ENCODE measurements at regions of chr19 and their contacts with region 1.

Region 1: GRCh38 chr19:1774999-1775772 is 21.9 kb downstream of the ONECUT3 start:
- DNase-seq: no peak
- ATAC-seq: peak; percentile 88
- H3K4me3 ChIP-seq: peak overlapping the region in 1 of 3 experiments; percentile 46; a peak in 1 of 6 replicates
- H3K27ac ChIP-seq: no peak overlapping the region
- H3K4me1 ChIP-seq: no peaks in the 10 kb centered on the region
- H3K27me3 ChIP-seq: peaks cover 8 to 66% of the 10 kb centered on the region in 2 experiments
- CTCF ChIP-seq: peak; percentile 90
- EP300 ChIP-seq: no peak
- POLR2A ChIP-seq: no peak
- RAD21 ChIP-seq: peak; percentile 87

Region 2: DNA sequence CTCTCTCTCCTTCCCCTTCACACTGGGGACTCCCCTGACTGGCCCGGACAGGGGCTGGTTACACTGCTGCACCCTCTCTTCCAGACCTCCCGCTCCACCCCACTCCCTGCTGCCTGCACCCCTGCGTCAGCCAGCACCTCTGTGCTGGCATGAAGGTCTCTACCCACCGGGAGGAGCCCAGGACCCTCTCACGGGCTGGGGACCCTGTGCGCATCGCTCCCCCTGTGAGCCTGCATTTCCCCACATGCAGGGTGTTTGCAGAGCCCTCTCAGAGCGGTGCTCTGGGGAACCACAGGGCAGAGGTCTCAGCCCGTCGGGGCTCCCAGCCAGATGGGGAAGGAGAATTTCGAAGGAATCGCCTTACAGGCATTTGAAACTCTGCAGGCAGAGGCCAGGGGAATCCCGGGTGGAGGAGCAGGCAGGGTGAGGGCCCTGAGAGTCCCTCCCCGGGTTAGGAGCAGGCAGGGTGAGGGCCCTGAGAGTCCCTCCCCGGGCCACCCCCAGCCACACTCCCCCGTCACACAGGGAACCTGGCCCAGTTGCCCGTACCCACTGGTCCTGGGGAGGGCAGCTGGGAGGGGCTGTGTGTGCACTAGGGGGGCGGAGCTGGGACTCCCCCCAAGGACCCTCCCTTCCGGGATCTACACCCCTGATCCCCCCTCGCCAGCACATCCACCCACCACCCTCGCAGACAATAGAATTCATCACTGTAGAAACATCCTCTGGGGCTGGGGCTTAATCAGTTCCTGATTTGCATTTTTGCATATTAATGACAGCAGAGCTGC is 106.5 kb before region 1 on chr19:
- CTCF ChIA-PET with region 1: no interaction called
- POLR2A ChIA-PET with region 1: no interaction called
- in situ Hi-C with region 1: no loop called
- intact Hi-C with region 1: no loop called
- DNase-seq: no peak
- ATAC-seq: peak; percentile 33
- H3K4me3 ChIP-seq: no peak overlapping the region
- H3K27ac ChIP-seq: no peak overlapping the region
- H3K4me1 ChIP-seq: no peaks in the 10 kb centered on the region; the same call in 1 of the 2 replicates
- H3K27me3 ChIP-seq: peaks cover 8 to 39% of the 10 kb centered on the region in 2 experiments; a peak in 4 of 5 replicates
- CTCF ChIP-seq: no peak
- EP300 ChIP-seq: no peak
- POLR2A ChIP-seq: no peak
- RAD21 ChIP-seq: no peak

Region 3: DNA sequence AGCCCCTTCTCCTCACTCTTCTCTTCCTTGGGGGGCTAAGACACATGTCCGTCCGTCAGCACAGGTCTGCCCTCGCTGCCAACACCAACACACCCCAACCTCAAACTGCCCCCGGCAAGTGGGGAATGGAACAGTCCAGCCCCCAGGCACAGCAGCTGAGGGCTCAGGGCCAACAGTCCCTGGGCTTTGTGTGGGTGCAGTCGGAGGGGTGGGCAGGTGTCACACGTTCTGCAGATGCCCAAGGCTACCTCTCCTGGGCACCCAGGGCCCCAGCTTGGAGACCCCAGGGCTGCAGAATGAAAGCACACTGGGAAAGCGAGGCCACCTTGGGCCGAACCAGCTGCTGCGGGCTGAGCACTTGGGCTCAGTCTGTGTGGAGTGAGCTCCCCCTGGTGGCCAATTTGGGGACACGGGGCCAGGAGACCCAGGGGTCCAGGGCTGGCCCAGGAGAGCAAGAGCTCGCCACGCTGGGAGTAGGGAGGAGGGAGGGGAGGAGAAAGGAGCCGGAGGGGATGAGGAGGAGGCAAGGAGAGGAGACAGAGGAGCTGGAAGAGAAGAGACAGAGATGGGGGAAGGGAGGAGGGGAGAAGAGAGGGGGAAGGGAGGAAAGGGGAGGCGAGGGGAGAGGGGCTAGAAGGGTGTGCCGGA is 50.8 kb after region 1 on chr19:
- CTCF ChIA-PET with region 1: interaction called, 15 read pairs
- POLR2A ChIA-PET with region 1: no interaction called
- in situ Hi-C with region 1: loop called (anchors 5 kb)
- intact Hi-C with region 1: no loop called
- DNase-seq: peak; percentile 48
- ATAC-seq: peak; percentile 80
- H3K4me3 ChIP-seq: no peak overlapping the region
- H3K27ac ChIP-seq: no peak overlapping the region
- H3K4me1 ChIP-seq: no peaks in the 10 kb centered on the region
- H3K27me3 ChIP-seq: no peaks in the 10 kb centered on the region
- CTCF ChIP-seq: peak; percentile 95
- EP300 ChIP-seq: no peak
- POLR2A ChIP-seq: 0 out of 4 replicates have a peak, but pooled peaks of 1 of the 2 experiments have one; percentile 30
- RAD21 ChIP-seq: peak; percentile 86